Activated naive CD8-positive, alpha-beta T cell treated with anti-CD3 and anti-CD28 coated beads, Interleukin-2, amount 10 ng/mL, durations not matched to agents 7 days and 5 days (primary cell): ENCODE measurements at regions of chr6 and their contacts with region 1.

Region 1: DNA sequence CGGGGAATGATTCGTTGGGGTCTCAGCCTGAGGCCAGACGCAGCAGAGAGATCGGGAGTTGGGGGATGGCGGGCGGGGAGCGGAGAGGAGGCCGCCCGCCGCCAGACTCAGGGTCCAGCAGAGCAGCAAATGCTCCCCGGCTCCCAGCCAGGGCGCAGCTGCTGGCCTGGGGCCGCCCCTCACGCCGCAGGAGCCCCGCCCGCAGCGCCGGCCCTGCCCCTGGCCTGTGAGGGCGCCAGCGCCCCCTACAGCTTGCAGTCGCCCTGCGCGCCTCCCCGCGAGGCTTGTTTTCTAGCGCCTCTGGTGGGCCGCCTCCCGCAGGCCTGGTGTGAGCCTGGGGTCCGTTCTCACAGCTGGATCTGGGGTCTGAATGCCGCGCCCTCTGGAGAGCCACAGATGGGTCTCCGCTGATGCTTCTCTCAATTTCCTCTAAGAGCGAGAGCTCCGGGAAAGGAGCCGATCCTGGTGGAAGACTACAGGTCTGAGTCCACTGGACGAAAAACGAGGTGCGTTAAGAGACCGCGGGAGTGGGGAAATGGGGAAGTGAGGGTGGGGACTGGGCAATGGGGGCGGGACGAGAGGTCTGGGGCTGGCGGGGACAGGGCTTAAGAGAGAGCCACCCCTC is 29.9 kb downstream of the TRIM38 start:
- DNase-seq: peak; percentile 99
- ATAC-seq: peak; percentile 96
- H3K4me3 Mint-ChIP-seq: peak overlapping the region; percentile 96
- H3K27ac Mint-ChIP-seq: peak overlapping the region; percentile 96
- H3K4me1 Mint-ChIP-seq: peaks cover 18% of the 10 kb centered on the region
- H3K27me3 Mint-ChIP-seq: no peaks in the 10 kb centered on the region

Region 2: DNA sequence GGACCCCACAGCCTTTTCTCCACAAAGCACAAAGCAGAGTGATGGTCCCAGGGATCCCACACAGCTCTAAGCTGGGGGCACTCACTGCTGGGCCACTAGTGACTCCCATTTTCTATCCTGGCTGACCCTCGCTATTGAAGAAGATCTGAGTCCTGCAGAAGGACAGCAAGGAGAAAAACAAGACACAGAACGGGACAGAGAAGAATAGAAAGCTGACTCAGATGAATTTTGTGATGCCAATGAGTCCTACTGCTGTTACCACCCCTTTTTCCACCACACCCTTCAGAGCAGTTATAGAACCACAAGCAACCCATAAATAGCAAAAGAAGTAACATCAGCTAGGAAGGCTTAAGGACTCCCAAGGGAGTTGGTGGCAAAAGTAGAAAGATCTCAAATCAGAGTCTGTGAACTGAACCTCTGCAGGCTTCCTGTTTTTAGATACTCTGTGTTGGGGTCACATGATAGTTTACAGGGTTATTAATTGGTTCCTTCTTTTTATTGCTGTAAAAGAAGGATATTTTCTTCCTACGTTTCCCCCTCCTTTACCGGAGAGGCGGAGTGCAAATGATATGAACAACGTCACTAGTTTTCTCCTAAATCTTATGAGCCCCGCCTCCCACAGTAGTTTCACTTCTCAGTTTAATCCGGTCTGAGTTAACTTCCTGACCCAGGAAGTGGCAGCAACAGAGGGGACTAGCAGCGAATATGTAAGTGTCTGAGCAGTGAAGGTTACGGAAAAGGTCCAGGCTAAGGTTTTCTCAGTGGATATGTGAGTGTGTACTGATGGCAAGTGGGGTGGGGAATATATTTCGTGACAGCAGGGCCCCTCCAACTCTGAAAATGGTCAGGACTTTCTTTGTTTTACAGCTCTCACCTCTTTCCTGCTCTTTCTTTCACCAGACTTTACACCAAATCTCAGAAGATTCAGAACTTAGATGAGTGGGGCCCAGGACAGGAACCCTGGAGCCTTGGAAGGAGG is 30.1 kb before region 1 on chr6 and contains the start of gene TRIM38:
- POLR2A ChIA-PET with region 1: interaction called, 14 read pairs
- DNase-seq: peak; percentile 51
- ATAC-seq: peak; percentile 91
- H3K4me3 Mint-ChIP-seq: peak within 1 kb of the TSS; percentile 98
- H3K27ac Mint-ChIP-seq: peak within 1 kb of the TSS; percentile 98
- H3K4me1 Mint-ChIP-seq: peaks cover 52% of the 10 kb centered on the region
- H3K27me3 Mint-ChIP-seq: no peaks in the 10 kb centered on the region
- total RNA-seq, gene TRIM38: 29.1 TPM

Region 3: GRCh38 chr6:26017632-26017966 is 25.1 kb after region 1 on chr6:
- POLR2A ChIA-PET with region 1: interaction called, 64 read pairs
- DNase-seq: peak; percentile 84
- ATAC-seq: peak; percentile 24
- H3K4me3 Mint-ChIP-seq: peak overlapping the region; percentile 77
- H3K27ac Mint-ChIP-seq: peak overlapping the region; percentile 92
- H3K4me1 Mint-ChIP-seq: peaks cover 26% of the 10 kb centered on the region
- H3K27me3 Mint-ChIP-seq: no peaks in the 10 kb centered on the region